ENCODE measurements at regions of chr3 and their contacts with region 1.

Region 1: GRCh38 chr3:189937307-189938124 is 183.2 kb downstream of the P3H2 start:
- DNase-seq: peak; percentile 100
- H3K4me3 Mint-ChIP-seq: peak overlapping the region; percentile 33
- H3K27ac Mint-ChIP-seq: peak overlapping the region; percentile 95
- H3K4me1 Mint-ChIP-seq: peaks cover 39% of the 10 kb centered on the region
- H3K27me3 Mint-ChIP-seq: no peaks in the 10 kb centered on the region
- CTCF ChIP-seq: no peak

Region 2: GRCh38 chr3:189099031-189099471 is 838.5 kb before region 1 on chr3:
- CTCF ChIA-PET with region 1: no interaction called
- POLR2A ChIA-PET with region 1: no interaction called
- intact Hi-C with region 1: no loop called
- DNase-seq: no peak
- H3K4me3 Mint-ChIP-seq: no peak overlapping the region
- H3K27ac Mint-ChIP-seq: no peak overlapping the region
- H3K4me1 Mint-ChIP-seq: peaks cover 5% of the 10 kb centered on the region
- H3K27me3 Mint-ChIP-seq: no peaks in the 10 kb centered on the region
- CTCF ChIP-seq: no peak

Region 3: DNA sequence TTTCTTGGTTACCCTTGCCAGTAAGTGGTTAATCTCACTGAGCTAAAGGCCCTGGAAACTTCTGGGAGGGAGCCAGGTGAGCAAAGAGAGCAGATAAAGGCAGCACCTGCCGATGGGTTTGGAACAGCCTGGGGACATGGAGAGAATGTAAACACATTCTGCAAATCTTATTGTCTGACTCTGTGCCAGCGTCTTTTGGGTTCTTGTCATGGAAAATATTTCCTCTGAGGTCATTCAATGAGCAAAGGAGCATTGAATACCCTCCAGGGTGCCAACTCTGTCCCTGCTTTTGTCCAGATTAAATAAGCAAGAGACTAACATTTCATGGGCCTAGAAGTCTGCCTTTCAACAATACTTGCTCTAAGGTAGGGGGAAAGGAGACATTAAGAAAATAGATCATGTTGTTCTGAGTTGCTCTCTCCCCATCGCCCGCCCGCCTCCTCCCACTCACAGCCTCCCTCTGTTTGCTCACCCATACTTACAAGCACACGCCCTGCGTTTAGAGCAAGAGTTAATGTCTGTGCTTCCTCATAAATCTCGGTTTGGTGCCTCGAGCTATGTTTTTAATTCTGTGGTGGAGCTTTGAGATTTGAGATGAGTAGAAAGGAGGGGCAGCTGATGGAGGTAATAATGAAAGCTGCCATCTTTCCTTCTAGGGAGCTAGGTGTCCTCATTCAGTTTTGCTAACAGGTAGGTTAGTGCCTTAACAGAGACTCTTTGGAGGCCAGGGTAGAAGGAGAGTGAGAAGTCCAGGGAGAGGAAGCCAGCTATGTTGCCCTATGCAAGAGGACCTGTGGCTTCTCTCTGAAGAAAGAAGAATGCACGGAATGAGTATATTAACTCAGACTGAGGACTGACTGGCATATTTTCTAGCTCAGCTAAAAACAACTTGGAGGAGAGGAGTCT is 632.8 kb before region 1 on chr3:
- CTCF ChIA-PET with region 1: no interaction called
- POLR2A ChIA-PET with region 1: interaction called, 10 read pairs
- intact Hi-C with region 1: no loop called
- DNase-seq: peak; percentile 96
- H3K4me3 Mint-ChIP-seq: peak overlapping the region; percentile 65
- H3K27ac Mint-ChIP-seq: peak overlapping the region; percentile 99
- H3K4me1 Mint-ChIP-seq: peaks cover 59% of the 10 kb centered on the region
- H3K27me3 Mint-ChIP-seq: no peaks in the 10 kb centered on the region
- CTCF ChIP-seq: no peak

Region 4: DNA sequence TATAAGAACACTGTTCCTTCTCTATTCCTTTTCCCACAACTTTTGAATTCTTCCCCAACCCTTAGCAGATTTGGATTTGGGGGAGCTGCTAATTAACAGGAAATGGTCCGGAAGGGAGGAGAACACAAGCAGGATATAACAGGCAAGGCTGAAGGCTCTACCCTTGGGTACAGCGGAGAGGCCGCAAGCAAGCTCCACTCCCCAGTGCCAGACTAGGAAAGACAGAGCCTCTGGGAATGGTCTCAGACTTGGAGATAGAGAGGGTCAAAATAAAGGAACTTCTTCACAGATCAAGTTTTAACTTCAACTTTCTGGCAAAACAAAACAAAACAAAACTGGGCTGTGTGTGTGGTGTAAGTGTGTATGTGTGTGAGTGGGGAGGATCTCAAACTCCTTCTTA is 145.4 kb before region 1 on chr3:
- CTCF ChIA-PET with region 1: no interaction called
- POLR2A ChIA-PET with region 1: interaction called, 8 read pairs
- intact Hi-C with region 1: loop called (anchors 2 kb)
- DNase-seq: peak; percentile 59
- H3K4me3 Mint-ChIP-seq: peak overlapping the region; percentile 76
- H3K27ac Mint-ChIP-seq: peak overlapping the region; percentile 99
- H3K4me1 Mint-ChIP-seq: peaks cover 19% of the 10 kb centered on the region
- H3K27me3 Mint-ChIP-seq: no peaks in the 10 kb centered on the region
- CTCF ChIP-seq: no peak

Region 5: GRCh38 chr3:189833996-189834395 is 103.5 kb before region 1 on chr3:
- CTCF ChIA-PET with region 1: interaction called, 3 read pairs
- POLR2A ChIA-PET with region 1: interaction called, 16 read pairs
- intact Hi-C with region 1: no loop called
- DNase-seq: peak; percentile 99
- H3K4me3 Mint-ChIP-seq: peak overlapping the region; percentile 26
- H3K27ac Mint-ChIP-seq: peak overlapping the region; percentile 37
- H3K4me1 Mint-ChIP-seq: peaks cover 41% of the 10 kb centered on the region
- H3K27me3 Mint-ChIP-seq: no peaks in the 10 kb centered on the region
- CTCF ChIP-seq: no peak

Region 6: GRCh38 chr3:189902230-189903186 is 35.0 kb before region 1 on chr3:
- CTCF ChIA-PET with region 1: interaction called, 3 read pairs
- POLR2A ChIA-PET with region 1: interaction called, 17 read pairs
- intact Hi-C with region 1: loop called (anchors 5 kb)
- DNase-seq: no peak
- H3K4me3 Mint-ChIP-seq: no peak overlapping the region
- H3K27ac Mint-ChIP-seq: peak overlapping the region; percentile 0
- H3K4me1 Mint-ChIP-seq: no peaks in the 10 kb centered on the region
- H3K27me3 Mint-ChIP-seq: no peaks in the 10 kb centered on the region
- CTCF ChIP-seq: no peak

Region 7: DNA sequence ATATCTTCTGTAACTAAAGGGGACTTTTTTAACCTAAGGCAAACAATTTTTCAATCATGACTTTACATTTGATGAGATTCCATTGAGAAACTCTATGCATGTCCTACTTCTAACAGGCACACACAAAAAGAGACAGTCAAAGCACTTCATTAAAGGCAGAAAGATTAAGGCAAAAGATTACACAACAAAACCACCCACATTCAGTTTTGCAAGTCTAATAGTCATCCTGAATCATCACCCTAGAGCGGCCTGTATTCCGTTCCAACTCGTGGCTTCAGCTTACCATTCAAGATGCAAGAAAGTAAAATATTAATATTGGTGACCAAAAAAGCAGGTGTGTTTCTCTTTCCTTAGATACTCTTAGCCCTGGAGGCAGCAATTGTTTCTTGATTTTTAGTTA is 22.7 kb before region 1 on chr3:
- CTCF ChIA-PET with region 1: interaction called, 4 read pairs
- POLR2A ChIA-PET with region 1: interaction called, 66 read pairs
- intact Hi-C with region 1: loop called (anchors 1 kb)
- DNase-seq: peak; percentile 96
- H3K4me3 Mint-ChIP-seq: no peak overlapping the region
- H3K27ac Mint-ChIP-seq: peak overlapping the region; percentile 59
- H3K4me1 Mint-ChIP-seq: peaks cover 37% of the 10 kb centered on the region
- H3K27me3 Mint-ChIP-seq: no peaks in the 10 kb centered on the region
- CTCF ChIP-seq: no peak

Region 8: GRCh38 chr3:190003681-190004123 is 66.2 kb after region 1 on chr3:
- CTCF ChIA-PET with region 1: no interaction called
- POLR2A ChIA-PET with region 1: no interaction called
- intact Hi-C with region 1: no loop called
- DNase-seq: peak; percentile 84
- H3K4me3 Mint-ChIP-seq: peak overlapping the region; percentile 8
- H3K27ac Mint-ChIP-seq: peak overlapping the region; percentile 81
- H3K4me1 Mint-ChIP-seq: peaks cover 20% of the 10 kb centered on the region
- H3K27me3 Mint-ChIP-seq: no peaks in the 10 kb centered on the region
- CTCF ChIP-seq: no peak

Region 9: GRCh38 chr3:190504354-190505125 is 567.0 kb after region 1 on chr3:
- CTCF ChIA-PET with region 1: no interaction called
- POLR2A ChIA-PET with region 1: no interaction called
- intact Hi-C with region 1: no loop called
- DNase-seq: peak; percentile 31
- H3K4me3 Mint-ChIP-seq: no peak overlapping the region
- H3K27ac Mint-ChIP-seq: no peak overlapping the region
- H3K4me1 Mint-ChIP-seq: peaks cover 6% of the 10 kb centered on the region
- H3K27me3 Mint-ChIP-seq: no peaks in the 10 kb centered on the region
- CTCF ChIP-seq: no peak